ENCODE measurements at regions of chr18 and their contacts with region 1.

Region 1: DNA sequence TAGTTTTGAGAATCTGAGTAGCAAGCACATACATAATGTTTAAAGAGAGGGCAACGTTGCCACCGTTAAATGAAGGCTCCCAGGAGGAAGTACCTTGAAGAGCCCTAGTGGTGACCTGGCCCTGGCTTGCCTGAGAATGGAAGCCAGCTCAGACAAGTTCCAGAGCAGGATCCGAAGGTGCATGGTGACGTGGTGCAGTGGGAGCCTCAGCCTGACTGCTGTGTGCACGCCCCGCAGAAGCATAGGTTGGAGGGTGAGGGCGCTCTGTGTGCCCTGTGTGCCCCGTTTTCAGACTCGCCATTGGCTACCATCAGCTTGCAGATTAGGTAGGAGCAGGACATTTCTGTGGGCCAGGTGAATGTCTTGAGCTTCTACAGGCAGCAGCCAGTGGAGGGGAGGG is 68.2 kb downstream of the ZNF407 start:
- DNase-seq: no peak
- ATAC-seq: no peak
- H3K4me3 ChIP-seq: no peak overlapping the region
- H3K4me3 Mint-ChIP-seq: no peak overlapping the region
- H3K27ac ChIP-seq: no peak overlapping the region
- H3K27ac Mint-ChIP-seq: no peak overlapping the region
- H3K4me1 ChIP-seq: no peaks in the 10 kb centered on the region
- H3K4me1 Mint-ChIP-seq: peaks cover 2% of the 10 kb centered on the region
- H3K27me3 ChIP-seq: no peaks in the 10 kb centered on the region
- H3K27me3 Mint-ChIP-seq: no peaks in the 10 kb centered on the region
- CTCF ChIP-seq: no peak

Region 2: GRCh38 chr18:74495581-74496507 is 170.1 kb before region 1 on chr18 and contains the start of gene CNDP2:
- CTCF ChIA-PET with region 1: no interaction called
- POLR2A ChIA-PET with region 1: no interaction called
- intact Hi-C with region 1: no loop called
- DNase-seq: peak; percentile 93 to 99 (median 99)
- ATAC-seq: peak; percentile 69
- H3K4me3 ChIP-seq: peak within 1 kb of the TSS; percentile 81
- H3K4me3 Mint-ChIP-seq: peak within 1 kb of the TSS; percentile 94
- H3K27ac ChIP-seq: peak within 1 kb of the TSS; percentile 87 to 90
- H3K27ac Mint-ChIP-seq: peak within 1 kb of the TSS; percentile 97
- H3K4me1 ChIP-seq: peaks cover 37% of the 10 kb centered on the region
- H3K4me1 Mint-ChIP-seq: peaks cover 58% of the 10 kb centered on the region
- H3K27me3 ChIP-seq: no peaks in the 10 kb centered on the region
- H3K27me3 Mint-ChIP-seq: no peaks in the 10 kb centered on the region
- CTCF ChIP-seq: no peak
- total RNA-seq, gene CNDP2: 51.7 to 55.8 TPM

Region 3: DNA sequence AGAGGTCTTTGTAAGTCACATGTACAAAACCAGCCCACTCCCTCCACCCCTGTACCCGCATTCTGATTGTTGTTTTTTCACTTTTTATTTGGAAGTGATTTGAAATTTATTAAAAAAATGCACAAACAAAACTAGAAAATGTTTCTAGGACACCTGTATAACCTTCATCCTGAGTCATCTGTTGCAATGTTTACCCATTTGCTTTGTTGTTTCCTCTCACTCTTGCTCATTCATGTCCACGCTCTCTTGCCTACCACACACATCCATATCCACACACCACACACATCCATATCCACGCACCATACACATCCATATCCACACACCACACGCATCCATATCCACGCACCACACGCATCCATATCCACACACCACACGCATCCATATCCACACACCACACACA is 49.4 kb before region 1 on chr18:
- CTCF ChIA-PET with region 1: no interaction called
- POLR2A ChIA-PET with region 1: no interaction called
- intact Hi-C with region 1: loop called in 1 of 2 experiments (anchors 5 kb)
- DNase-seq: no peak
- ATAC-seq: no peak
- H3K4me3 ChIP-seq: no peak overlapping the region
- H3K4me3 Mint-ChIP-seq: no peak overlapping the region
- H3K27ac ChIP-seq: no peak overlapping the region
- H3K27ac Mint-ChIP-seq: no peak overlapping the region
- H3K4me1 ChIP-seq: peaks cover 2% of the 10 kb centered on the region
- H3K4me1 Mint-ChIP-seq: peaks cover 14% of the 10 kb centered on the region
- H3K27me3 ChIP-seq: peaks cover 0 to 5% of the 10 kb centered on the region in 2 experiments
- H3K27me3 Mint-ChIP-seq: no peaks in the 10 kb centered on the region
- CTCF ChIP-seq: no peak

Region 4: GRCh38 chr18:75070625-75071483 is 404.9 kb after region 1 on chr18:
- CTCF ChIA-PET with region 1: no interaction called
- POLR2A ChIA-PET with region 1: no interaction called
- intact Hi-C with region 1: no loop called
- DNase-seq: peak; percentile 19 to 88 (median 74)
- ATAC-seq: peak; percentile 90
- H3K4me3 ChIP-seq: peak overlapping the region; percentile 9 to 46
- H3K4me3 Mint-ChIP-seq: peak overlapping the region; percentile 80
- H3K27ac ChIP-seq: peak overlapping the region; percentile 50 to 86
- H3K27ac Mint-ChIP-seq: peak overlapping the region; percentile 97
- H3K4me1 ChIP-seq: peaks cover 28% of the 10 kb centered on the region
- H3K4me1 Mint-ChIP-seq: peaks cover 41% of the 10 kb centered on the region
- H3K27me3 ChIP-seq: no peaks in the 10 kb centered on the region
- H3K27me3 Mint-ChIP-seq: no peaks in the 10 kb centered on the region
- CTCF ChIP-seq: no peak